K562 (cell line): ENCODE measurements at regions of chr2 and their contacts with region 1.

Region 1: DNA sequence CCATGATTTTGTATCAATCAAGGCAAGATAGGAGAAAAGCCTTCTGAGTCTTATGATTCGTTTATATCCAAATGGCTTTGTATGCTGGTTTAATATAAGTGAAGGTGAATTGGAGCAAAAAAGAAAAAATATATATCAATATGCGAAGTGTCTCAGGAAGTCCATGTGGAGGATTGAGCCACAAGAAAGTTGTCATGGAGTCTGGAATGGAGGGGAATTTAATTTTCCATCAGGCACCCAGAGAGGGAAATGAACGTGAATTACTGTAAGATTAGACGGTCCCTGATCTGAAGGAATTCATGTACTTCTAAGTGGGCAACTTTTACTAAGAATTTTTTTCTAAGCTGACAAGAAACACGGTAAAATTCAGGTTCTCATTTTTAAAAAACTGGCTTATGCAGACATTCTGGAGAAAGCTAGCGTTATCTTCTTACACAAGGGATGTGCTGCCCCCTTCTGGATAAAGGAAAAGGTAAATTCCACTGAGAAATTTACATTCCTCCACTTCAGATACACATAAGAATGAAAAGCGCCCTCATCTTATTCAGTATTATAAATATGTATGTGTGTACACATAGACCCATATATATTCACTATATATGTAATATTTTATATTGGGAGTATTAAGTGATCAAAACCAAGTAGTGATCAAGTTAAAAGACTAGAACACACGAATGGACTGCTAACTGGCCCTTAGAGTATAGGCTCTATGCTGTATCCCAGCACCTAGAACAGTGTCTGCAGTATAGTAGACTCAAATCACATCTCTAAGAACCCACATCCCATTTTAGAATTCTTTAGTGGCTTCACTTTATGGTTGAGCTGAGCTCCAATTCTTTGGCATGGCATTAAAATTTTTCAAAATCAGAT is 289.0 kb upstream of the TFPI start:
- DNase-seq: peak; percentile 9 to 57 (median 19)
- ATAC-seq: peak; percentile 75
- H3K4me3 ChIP-seq: no peak overlapping the region
- H3K27ac ChIP-seq: no peak overlapping the region
- H3K4me1 ChIP-seq: no peaks in the 10 kb centered on the region
- H3K27me3 ChIP-seq: no peaks in the 10 kb centered on the region
- CTCF ChIP-seq: peak; percentile 34 to 61 (median 46); a peak in 5 of 6 replicates
- EP300 ChIP-seq: no peak
- POLR2A ChIP-seq: no peak
- RAD21 ChIP-seq: peak; percentile 46 to 71

Region 2: GRCh38 chr2:187826023-187826422 is 17.2 kb before region 1 on chr2:
- CTCF ChIA-PET with region 1: no interaction called
- POLR2A ChIA-PET with region 1: no interaction called
- in situ Hi-C with region 1: no loop called
- intact Hi-C with region 1: loop called (anchors 1 kb)
- DNase-seq: no peak
- ATAC-seq: no peak
- H3K4me3 ChIP-seq: no peak overlapping the region
- H3K27ac ChIP-seq: no peak overlapping the region
- H3K4me1 ChIP-seq: no peaks in the 10 kb centered on the region; a peak in 1 of 5 replicates
- H3K27me3 ChIP-seq: no peaks in the 10 kb centered on the region
- CTCF ChIP-seq: no peak
- EP300 ChIP-seq: no peak
- POLR2A ChIP-seq: no peak
- RAD21 ChIP-seq: no peak

Region 3: DNA sequence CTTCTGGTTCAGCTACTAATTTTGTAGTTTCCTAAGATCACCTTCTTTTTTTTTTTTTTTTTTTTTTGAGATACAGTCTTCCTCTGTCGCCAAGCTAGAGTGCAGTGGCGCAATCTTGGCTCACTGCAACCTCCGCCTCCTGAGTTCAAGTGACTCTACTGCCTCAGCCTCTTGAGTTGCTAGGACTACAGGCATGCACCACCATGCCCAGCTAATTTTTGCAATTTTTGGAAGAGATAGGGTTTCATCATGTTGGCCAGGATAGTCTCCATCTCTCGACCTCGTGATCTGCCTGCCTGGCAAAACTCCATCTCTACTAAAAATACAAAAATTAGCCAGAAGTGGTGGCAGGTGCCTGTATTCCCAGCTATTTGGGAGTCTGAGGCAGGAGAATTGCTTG is 12.5 kb after region 1 on chr2:
- CTCF ChIA-PET with region 1: no interaction called
- POLR2A ChIA-PET with region 1: no interaction called
- in situ Hi-C with region 1: no loop called
- intact Hi-C with region 1: no loop called
- DNase-seq: no peak
- ATAC-seq: no peak
- H3K4me3 ChIP-seq: no peak overlapping the region
- H3K27ac ChIP-seq: no peak overlapping the region
- H3K4me1 ChIP-seq: no peaks in the 10 kb centered on the region
- H3K27me3 ChIP-seq: no peaks in the 10 kb centered on the region
- CTCF ChIP-seq: no peak
- EP300 ChIP-seq: no peak
- POLR2A ChIP-seq: no peak
- RAD21 ChIP-seq: no peak

Region 4: GRCh38 chr2:187890690-187891089 is 47.5 kb after region 1 on chr2:
- CTCF ChIA-PET with region 1: no interaction called
- POLR2A ChIA-PET with region 1: no interaction called
- in situ Hi-C with region 1: no loop called
- intact Hi-C with region 1: no loop called
- DNase-seq: no peak
- ATAC-seq: no peak
- H3K4me3 ChIP-seq: no peak overlapping the region
- H3K27ac ChIP-seq: no peak overlapping the region
- H3K4me1 ChIP-seq: no peaks in the 10 kb centered on the region
- H3K27me3 ChIP-seq: no peaks in the 10 kb centered on the region
- CTCF ChIP-seq: no peak
- EP300 ChIP-seq: no peak
- POLR2A ChIP-seq: no peak
- RAD21 ChIP-seq: no peak

Region 5: DNA sequence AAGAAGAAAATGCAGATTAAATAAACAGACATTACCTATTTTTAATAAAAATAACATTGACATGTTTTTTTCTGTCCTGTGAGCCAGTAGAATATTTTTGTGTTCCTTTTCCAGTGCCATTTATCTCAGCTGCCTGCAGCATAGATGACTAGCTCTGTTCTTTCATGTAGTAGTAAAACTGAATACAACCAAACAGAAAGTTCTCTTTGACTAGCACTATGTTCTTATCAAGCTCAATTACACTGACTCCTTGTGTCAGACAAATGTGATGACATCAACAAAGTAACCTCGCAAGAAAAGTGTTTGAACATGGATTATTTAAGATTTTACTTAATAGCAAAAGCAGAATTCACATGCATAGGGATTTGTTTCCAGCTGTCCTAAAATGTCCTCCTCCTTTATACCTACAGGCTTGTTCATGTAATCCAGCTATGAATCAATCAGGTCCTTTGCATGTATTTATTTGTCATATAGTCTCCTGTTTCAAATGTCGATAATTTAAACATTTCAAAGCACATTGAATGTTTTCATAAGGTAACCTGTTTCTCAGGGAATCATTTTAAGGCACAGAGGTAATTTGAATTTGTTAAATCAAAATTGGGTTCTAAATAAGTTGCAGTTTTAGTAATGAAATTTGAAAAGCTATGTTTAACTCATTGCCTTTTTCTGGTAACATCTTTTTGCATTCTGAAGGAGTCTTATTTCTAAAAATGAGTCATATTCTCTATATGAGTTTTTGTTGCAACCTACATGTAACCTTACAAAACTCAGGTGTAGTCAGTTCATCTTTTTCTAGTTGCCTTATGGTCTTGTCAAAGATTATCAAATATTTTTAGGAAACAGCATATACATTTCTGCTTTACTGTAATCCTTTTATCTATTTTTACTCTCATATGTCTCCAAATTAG is 233.2 kb after region 1 on chr2:
- CTCF ChIA-PET with region 1: no interaction called
- POLR2A ChIA-PET with region 1: no interaction called
- in situ Hi-C with region 1: no loop called
- intact Hi-C with region 1: no loop called
- DNase-seq: no peak
- ATAC-seq: no peak
- H3K4me3 ChIP-seq: no peak overlapping the region
- H3K27ac ChIP-seq: no peak overlapping the region
- H3K4me1 ChIP-seq: no peaks in the 10 kb centered on the region
- H3K27me3 ChIP-seq: no peaks in the 10 kb centered on the region
- CTCF ChIP-seq: no peak
- EP300 ChIP-seq: no peak
- POLR2A ChIP-seq: no peak
- RAD21 ChIP-seq: no peak

Region 6: DNA sequence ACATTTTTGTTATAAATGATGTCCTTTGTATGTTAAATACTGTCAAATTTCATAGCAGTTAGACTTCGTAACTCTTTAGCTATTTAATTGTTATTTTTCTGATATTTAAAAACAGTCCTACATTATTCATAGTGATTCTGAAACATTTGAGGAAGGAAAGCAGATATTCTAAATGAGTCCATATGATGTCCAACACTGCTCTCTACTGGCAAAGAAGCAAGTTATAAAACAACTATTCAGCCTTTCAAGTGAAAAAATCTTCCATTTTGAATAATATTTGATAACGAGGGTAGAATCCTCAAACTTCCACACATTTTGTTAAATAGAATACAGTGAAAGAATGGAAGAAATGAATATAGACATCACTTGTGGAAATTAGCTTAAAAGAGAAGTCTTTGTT is 669.2 kb after region 1 on chr2:
- CTCF ChIA-PET with region 1: no interaction called
- POLR2A ChIA-PET with region 1: no interaction called
- in situ Hi-C with region 1: no loop called
- intact Hi-C with region 1: loop called (anchors 10 kb)
- DNase-seq: peak in 2 of 4 experiments; percentile 4 to 35
- ATAC-seq: peak; percentile 76
- H3K4me3 ChIP-seq: no peak overlapping the region
- H3K27ac ChIP-seq: no peak overlapping the region
- H3K4me1 ChIP-seq: no peaks in the 10 kb centered on the region
- H3K27me3 ChIP-seq: no peaks in the 10 kb centered on the region
- CTCF ChIP-seq: peak in 2 of 3 experiments; percentile 23 to 59; a peak in 3 of 6 replicates
- EP300 ChIP-seq: no peak
- POLR2A ChIP-seq: no peak
- RAD21 ChIP-seq: peak; percentile 72

Region 7: GRCh38 chr2:188682838-188683237 is 839.6 kb after region 1 on chr2:
- CTCF ChIA-PET with region 1: no interaction called
- POLR2A ChIA-PET with region 1: no interaction called
- in situ Hi-C with region 1: no loop called
- intact Hi-C with region 1: no loop called
- DNase-seq: no peak
- ATAC-seq: no peak
- H3K4me3 ChIP-seq: no peak overlapping the region
- H3K27ac ChIP-seq: no peak overlapping the region
- H3K4me1 ChIP-seq: no peaks in the 10 kb centered on the region
- H3K27me3 ChIP-seq: no peaks in the 10 kb centered on the region
- CTCF ChIP-seq: no peak
- EP300 ChIP-seq: no peak
- POLR2A ChIP-seq: no peak
- RAD21 ChIP-seq: no peak